Psoas muscle (tissue), 8 donors: ENCODE measurements at regions of chr1 and their contacts with region 1.

Region 1: GRCh38 chr1:24111996-24112779 is at the start of gene MYOM3:
- DNase-seq: peak; percentile 81 to 91
- ATAC-seq: peak; percentile 71 to 81 (median 76)
- H3K4me3 ChIP-seq: peak within 1 kb of the TSS; percentile 67
- H3K27ac ChIP-seq: peak within 1 kb of the TSS; percentile 91
- H3K4me1 ChIP-seq: peaks cover 41% of the 10 kb centered on the region
- H3K27me3 ChIP-seq: no peaks in the 10 kb centered on the region
- CTCF ChIP-seq: peak; percentile 53
- total RNA-seq, gene MYOM3: 130 to 505 (median 308) TPM

Region 2: DNA sequence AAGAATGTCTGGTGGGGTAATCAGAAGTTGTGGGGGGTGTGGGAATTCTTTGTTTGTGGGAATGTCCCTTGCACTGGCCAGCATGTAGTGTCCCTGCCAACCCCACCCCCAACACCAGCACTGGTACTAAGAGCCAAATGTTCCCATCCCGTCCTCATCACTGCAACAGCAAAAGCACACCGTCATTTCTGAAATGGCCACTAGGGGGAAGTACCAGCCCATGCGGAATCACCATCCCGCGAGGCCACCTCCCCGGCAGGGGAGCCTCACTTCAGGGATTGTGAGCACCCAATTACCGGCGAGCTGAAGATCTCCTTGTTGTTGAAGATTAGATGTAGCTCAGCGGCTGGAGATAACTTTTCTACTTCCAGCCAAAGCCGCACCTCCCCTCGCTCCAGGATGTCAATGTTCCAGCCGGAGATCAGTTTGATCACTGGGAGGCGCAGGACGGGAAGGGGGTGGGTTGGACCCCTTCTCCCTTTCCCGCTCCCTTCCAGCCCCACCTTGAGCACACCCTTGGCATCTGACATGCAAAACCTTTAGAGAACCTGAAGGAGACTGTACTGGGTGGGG is 41.3 kb before region 1 on chr1:
- intact Hi-C with region 1: loop called (anchors 1 to 5 kb)
- DNase-seq: peak; percentile 75 to 85
- ATAC-seq: peak; percentile 69 to 81 (median 74)
- H3K4me3 ChIP-seq: no peak overlapping the region
- H3K27ac ChIP-seq: peak overlapping the region; percentile 1
- H3K4me1 ChIP-seq: no peaks in the 10 kb centered on the region
- H3K27me3 ChIP-seq: no peaks in the 10 kb centered on the region
- CTCF ChIP-seq: peak; percentile 88

Region 3: DNA sequence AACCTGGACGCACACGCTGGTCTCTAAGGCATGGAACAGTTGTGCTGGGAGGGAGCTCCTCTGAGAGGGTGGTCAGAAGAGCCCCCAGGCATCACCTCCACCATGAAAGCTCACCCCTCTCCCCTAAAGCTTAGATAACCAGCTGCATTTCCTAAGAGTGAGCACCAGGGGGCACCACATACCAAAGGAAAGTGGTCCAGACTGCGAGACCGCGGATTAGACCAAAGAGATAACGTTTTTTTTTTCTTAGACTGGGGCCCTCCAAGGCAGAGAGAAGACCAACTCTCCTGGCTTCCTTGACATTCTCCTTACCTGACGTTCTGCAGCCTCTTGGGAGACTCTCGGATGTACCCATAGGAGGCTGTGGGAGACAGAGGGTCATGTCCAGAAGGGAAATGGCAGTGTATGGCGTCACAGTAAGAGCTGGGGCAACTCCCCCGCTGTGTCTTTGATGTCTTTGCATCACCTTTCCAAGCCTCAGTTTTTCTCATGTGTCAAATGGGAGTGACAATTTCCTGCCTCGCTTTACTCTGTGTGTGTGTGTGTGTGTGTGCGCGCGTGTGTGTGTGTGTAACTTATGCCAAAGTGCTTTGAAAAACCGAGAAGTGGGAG is 87.2 kb after region 1 on chr1:
- intact Hi-C with region 1: no loop called
- DNase-seq: peak; percentile 48 to 69
- ATAC-seq: peak; percentile 66 to 85 (median 75)
- H3K4me3 ChIP-seq: peak overlapping the region; percentile 10
- H3K27ac ChIP-seq: no peak overlapping the region
- H3K4me1 ChIP-seq: no peaks in the 10 kb centered on the region
- H3K27me3 ChIP-seq: no peaks in the 10 kb centered on the region
- CTCF ChIP-seq: peak; percentile 90